PC-3 (cell line): ENCODE measurements at regions of chr4 and their contacts with region 1.

Region 1: DNA sequence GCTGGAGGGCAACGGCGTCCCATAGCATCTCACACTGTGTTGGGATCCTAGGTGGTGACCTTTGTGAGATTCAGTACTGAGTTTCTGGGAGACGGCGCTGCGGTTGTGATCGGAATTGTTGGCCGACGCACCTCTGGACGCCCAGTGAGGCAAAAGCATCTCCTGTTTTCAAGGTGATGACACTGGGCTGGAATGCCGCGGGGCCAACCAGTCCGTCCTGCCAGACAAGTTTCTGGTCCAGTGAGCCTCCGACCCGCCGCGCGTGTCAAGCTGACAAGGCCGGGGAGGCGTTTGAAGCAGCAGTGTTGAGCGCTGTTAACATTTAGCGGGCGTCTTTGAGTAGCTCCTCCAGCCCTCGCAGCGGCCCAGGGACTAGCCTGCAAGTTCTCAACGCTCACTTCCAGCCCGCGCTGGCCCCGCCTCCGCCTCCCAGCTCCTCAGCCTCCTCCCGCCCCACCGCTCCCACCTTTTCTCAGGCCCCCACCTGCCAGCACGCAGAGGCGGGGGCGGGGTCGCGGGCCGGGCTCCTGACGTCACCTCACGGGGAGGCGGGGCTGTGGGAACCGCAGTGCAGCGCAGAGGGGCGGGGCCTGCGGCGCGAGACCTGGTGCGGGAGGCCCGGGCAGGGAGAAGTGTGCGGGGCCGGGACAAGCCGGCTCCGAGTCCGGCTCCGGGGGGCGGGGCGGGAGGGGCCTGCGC is 476 bp upstream of the CDS1 start:
- DNase-seq: peak; percentile 91
- ATAC-seq: peak; percentile 74
- H3K4me3 ChIP-seq: peak overlapping the region; percentile 100
- H3K27ac ChIP-seq: peak overlapping the region; percentile 90
- H3K4me1 ChIP-seq: peaks cover 27% of the 10 kb centered on the region
- H3K27me3 ChIP-seq: no peaks in the 10 kb centered on the region
- CTCF ChIP-seq: no peak

Region 2: GRCh38 chr4:84632092-84632491 is 49.6 kb after region 1 on chr4:
- CTCF ChIA-PET with region 1: interaction called, 4 read pairs
- POLR2A ChIA-PET with region 1: no interaction called
- intact Hi-C with region 1: loop called (anchors 5 kb)
- DNase-seq: peak; percentile 79
- ATAC-seq: peak; percentile 57
- H3K4me3 ChIP-seq: no peak overlapping the region
- H3K27ac ChIP-seq: no peak overlapping the region
- H3K4me1 ChIP-seq: peaks cover 26% of the 10 kb centered on the region
- H3K27me3 ChIP-seq: no peaks in the 10 kb centered on the region
- CTCF ChIP-seq: no peak

Region 3: GRCh38 chr4:84647312-84647884 is 64.9 kb after region 1 on chr4:
- CTCF ChIA-PET with region 1: no interaction called
- POLR2A ChIA-PET with region 1: no interaction called
- intact Hi-C with region 1: no loop called
- DNase-seq: no peak
- ATAC-seq: no peak
- H3K4me3 ChIP-seq: no peak overlapping the region
- H3K27ac ChIP-seq: no peak overlapping the region
- H3K4me1 ChIP-seq: peaks cover 10% of the 10 kb centered on the region
- H3K27me3 ChIP-seq: no peaks in the 10 kb centered on the region
- CTCF ChIP-seq: no peak

Region 4: GRCh38 chr4:84691170-84691691 is 108.8 kb after region 1 on chr4:
- CTCF ChIA-PET with region 1: interaction called, 6 read pairs
- POLR2A ChIA-PET with region 1: no interaction called
- intact Hi-C with region 1: loop called (anchors 2 kb)
- DNase-seq: peak; percentile 93
- ATAC-seq: peak; percentile 83
- H3K4me3 ChIP-seq: peak overlapping the region; percentile 62
- H3K27ac ChIP-seq: peak overlapping the region; percentile 99
- H3K4me1 ChIP-seq: peaks cover 38% of the 10 kb centered on the region
- H3K27me3 ChIP-seq: no peaks in the 10 kb centered on the region
- CTCF ChIP-seq: no peak

Region 5: DNA sequence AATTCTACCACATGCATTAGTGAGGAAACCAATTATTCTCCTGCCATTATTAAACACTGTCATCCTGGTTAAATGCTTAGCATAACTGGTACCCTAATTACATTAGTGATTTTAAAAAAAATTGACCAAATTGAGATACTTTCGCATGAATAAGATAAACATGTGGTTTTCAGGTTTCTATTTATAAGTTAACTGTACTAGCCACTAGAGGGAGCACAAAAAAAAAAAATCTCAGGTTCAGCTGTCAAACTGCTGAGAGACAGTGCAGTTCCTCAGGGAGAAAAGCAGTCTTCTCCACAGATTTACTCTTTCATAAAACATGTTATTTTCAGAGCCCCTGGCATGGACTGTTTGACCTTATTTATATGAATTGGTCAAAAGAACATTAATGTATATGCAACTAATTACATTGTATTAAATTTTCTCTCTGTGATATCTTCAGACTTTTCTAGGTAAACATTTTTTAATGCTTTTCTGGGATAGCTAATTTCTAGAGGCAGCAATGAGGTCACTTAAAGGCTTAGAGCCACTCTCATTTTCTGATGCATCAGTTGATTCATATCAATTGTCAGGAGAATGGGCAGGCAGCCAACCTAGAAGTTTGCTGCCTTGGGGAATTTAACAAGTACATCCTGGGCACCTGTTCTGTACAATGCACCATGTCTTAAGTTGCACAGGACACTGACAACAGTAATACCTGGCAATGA is 168.0 kb after region 1 on chr4:
- CTCF ChIA-PET with region 1: interaction called, 5 read pairs
- POLR2A ChIA-PET with region 1: no interaction called
- intact Hi-C with region 1: loop called (anchors 2 kb)
- DNase-seq: peak; percentile 61
- ATAC-seq: 0 out of 2 replicates have a peak, but pooled peaks have one; percentile 29
- H3K4me3 ChIP-seq: no peak overlapping the region
- H3K27ac ChIP-seq: no peak overlapping the region
- H3K4me1 ChIP-seq: no peaks in the 10 kb centered on the region
- H3K27me3 ChIP-seq: no peaks in the 10 kb centered on the region
- CTCF ChIP-seq: peak; percentile 71